ENCODE measurements at regions of chr11 and their contacts with region 1.

Region 1: DNA sequence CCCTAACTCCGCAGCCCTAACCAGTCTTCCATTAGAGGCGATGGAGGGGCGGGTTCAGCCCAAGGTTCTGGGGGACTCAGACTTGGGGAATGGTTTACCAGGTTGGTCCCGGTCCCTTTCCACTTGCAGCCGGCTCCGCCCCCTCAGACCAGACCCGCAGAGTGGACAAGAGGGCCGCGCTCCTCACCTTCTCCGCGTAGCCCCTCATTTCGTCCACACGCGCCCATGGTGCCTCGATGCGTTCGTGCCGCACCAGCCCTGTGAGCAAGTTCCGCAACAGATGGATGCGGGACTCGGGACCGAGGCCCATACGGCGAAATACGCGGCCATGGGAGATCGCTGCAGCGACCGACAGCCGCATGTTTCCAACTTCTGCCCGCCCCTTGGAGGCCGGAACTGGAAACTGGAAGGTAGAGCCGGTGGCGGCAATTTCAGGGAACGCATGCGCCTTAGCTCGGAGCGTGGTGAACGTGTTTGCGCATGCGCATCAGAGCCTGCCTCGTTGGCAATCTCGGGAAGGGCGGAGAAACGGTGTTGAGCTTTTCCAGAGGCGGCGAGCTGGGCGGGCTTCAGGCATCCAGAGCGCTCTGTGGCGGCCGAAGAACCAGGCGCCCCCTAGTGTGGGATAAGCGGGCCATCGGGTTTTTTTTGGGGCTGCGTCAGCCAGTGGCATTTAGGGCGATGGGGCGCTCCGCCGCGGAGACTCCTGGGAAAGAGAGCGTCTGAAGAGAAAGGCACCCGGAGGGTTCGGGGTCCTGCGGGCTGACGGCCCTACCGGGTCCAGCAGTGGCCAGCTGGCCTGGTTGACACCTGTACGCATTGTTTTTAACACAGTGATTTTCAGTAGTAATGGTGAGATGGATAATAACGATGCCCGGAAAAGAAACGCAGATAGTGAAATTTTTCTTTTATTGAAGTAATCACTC is at the start of gene MRPL17:
- DNase-seq: peak; percentile 97 to 99
- ATAC-seq: peak; percentile 95 to 98
- H3K4me3 ChIP-seq: peak within 1 kb of the TSS; percentile 83
- H3K27ac ChIP-seq: peak within 1 kb of the TSS; percentile 86 to 95
- H3K4me1 ChIP-seq: peaks cover 11% of the 10 kb centered on the region; the same call in 2 of the 3 replicates
- CTCF ChIP-seq: peak; percentile 88
- EP300 ChIP-seq: no peak
- POLR2A ChIP-seq: peak; percentile 98
- RAD21 ChIP-seq: peak; percentile 55 to 76
- polyA plus RNA-seq, gene MRPL17: 96.8 and 107 TPM in 2 replicates

Region 2: GRCh38 chr11:6531267-6531752 is 151.9 kb before region 1 on chr11:
- CTCF ChIA-PET with region 1: interaction called, 35 read pairs
- POLR2A ChIA-PET with region 1: interaction called, 5 read pairs
- DNase-seq: peak; percentile 57 to 79
- ATAC-seq: peak; percentile 88 to 93
- H3K4me3 ChIP-seq: no peak overlapping the region
- H3K27ac ChIP-seq: no peak overlapping the region
- H3K4me1 ChIP-seq: no peaks in the 10 kb centered on the region
- CTCF ChIP-seq: peak; percentile 76
- EP300 ChIP-seq: no peak
- POLR2A ChIP-seq: no peak
- RAD21 ChIP-seq: peak; percentile 69 to 76

Region 3: DNA sequence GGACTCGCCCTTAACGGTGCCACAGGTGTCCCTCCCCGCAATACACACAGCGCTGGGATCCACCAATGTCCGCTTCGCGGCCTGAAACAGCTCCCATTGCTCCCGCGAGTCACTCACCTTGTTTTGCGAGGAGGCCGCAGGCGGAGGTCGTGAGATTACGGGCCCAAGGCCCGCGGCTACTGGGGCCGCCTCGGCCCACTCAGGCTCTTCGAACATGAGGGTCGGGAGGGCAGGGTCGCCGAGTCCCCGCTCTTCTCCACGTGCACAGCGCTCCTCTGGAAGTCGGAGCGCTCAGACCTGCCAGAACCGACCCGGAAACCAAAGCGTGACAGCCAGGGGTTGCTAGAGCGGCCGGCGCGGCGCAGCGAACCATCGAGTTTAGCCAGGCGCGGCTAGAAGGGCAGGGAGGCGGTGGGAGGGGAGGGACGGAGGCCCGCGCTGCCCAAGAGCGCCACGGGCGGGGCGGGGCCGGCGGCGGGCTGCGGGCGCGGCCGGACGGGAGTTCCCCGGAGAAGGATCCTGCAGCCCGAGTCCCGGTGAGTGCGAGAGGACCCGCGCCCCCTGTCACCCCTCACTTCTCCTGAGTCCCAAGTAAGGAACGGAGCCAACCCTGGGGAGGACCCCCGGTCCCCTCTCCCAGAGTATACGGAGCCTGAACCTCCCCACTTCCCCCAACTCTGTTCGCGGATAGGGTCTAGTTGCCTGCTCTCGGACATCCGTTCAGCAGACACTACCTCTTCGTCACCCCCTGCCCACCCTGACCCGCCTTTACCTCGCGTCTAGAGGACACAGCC is 79.7 kb before region 1 on chr11 and contains the starts of genes ILK and RRP8:
- CTCF ChIA-PET with region 1: interaction called, 23 read pairs
- POLR2A ChIA-PET with region 1: interaction called, 13 read pairs
- DNase-seq: peak; percentile 91 to 92
- ATAC-seq: peak; percentile 80 to 90
- H3K4me3 ChIP-seq: peak within 1 kb of the TSS; percentile 79
- H3K27ac ChIP-seq: peak within 1 kb of the TSS; percentile 90 to 98
- H3K4me1 ChIP-seq: peaks cover 39% of the 10 kb centered on the region
- CTCF ChIP-seq: no peak
- EP300 ChIP-seq: no peak
- POLR2A ChIP-seq: peak; percentile 58
- RAD21 ChIP-seq: no peak
- polyA plus RNA-seq, gene ILK: 109 and 120 TPM in 2 replicates
- polyA plus RNA-seq, gene RRP8: 20.5 and 25.9 TPM in 2 replicates

Region 4: DNA sequence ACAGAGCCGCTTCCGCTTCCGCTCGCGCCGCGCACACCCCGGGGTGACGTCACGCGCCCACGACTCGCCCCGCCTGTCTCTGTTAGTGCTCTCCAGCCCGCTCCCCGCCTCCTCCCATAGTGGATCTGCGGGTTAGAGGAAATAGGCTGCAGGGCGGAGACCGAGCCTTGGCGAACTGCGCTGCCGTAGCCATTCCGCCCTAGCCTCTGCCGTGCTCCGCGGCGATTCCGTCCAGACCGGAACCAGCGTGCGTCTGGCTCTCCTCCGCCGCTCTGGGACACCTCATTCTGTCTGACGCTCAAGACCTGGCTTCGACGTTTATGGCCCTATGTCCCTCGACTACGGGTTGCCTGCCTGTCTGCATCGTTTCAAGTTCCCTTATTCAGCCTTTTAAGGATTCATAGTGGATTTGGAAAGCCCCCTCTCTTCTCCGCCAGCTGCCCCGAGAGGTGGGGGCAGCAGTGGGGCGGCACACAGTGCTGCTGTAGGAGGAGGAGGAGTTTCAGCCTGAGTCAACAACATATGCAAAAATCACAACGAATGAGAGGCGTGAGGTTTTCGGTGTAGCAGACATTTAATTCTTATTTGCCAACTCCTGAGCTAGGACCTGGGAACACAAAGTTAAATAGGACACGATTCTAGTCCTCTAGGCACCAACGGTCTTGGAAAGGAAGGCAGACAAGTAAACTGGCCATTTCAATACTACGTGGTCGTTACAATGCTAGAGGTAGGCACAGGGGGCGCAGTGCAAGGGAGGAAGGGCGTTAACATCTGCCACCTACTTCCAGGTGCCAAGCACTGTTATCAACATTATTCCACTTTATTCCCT is 70.8 kb before region 1 on chr11 and contains the start of gene TAF10:
- CTCF ChIA-PET with region 1: interaction called, 27 read pairs
- POLR2A ChIA-PET with region 1: interaction called, 15 read pairs
- DNase-seq: peak; percentile 89 to 94
- ATAC-seq: peak; percentile 90 to 94
- H3K4me3 ChIP-seq: peak within 1 kb of the TSS; percentile 78
- H3K27ac ChIP-seq: peak within 1 kb of the TSS; percentile 92 to 98
- H3K4me1 ChIP-seq: peaks cover 18% of the 10 kb centered on the region
- CTCF ChIP-seq: peak; percentile 41
- EP300 ChIP-seq: no peak
- POLR2A ChIP-seq: peak; percentile 96
- RAD21 ChIP-seq: no peak; a peak in 1 of 5 replicates
- polyA plus RNA-seq, gene TAF10: 174 and 242 TPM in 2 replicates

Region 5: DNA sequence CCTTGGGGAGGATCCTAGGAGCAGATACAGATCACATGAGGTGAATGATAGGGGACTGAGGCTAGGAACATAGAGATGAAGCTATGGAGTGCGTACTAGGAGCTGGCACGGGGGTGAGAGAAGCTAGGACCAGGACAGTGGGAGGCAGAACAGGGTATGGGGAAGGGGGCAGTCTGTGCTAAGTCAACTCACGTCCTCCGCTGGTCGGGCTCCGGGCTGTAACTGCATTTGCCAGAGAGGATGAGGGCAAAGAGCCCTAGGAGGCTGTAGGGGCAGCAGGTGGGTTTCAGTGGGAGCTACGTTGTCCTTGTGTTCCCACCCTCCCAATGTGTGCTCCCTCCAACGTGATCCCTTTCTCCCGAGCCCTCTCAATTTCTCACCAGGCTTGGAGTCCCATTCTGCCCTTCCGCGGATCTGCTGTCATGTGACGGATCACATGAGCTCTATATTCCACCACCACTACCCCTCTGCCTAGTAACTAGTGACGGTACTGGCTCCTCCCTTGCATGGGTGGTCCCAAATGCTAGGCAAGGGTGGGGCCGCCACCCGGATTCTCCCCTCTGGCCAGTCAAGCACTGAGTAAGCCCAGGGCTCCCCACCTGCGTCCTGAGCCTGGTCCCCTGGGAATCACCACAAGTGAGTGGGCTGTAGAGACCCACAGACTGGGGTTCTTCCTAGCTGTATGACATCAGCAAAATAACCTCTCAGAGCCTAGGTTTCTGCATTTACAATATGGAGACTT is 64.0 kb before region 1 on chr11 and contains the start of gene TPP1:
- CTCF ChIA-PET with region 1: interaction called, 27 read pairs
- POLR2A ChIA-PET with region 1: interaction called, 11 read pairs
- DNase-seq: peak; percentile 94 to 99
- ATAC-seq: peak; percentile 92 to 99
- H3K4me3 ChIP-seq: peak within 1 kb of the TSS; percentile 70
- H3K27ac ChIP-seq: peak within 1 kb of the TSS; percentile 80 to 90
- H3K4me1 ChIP-seq: peaks cover 12% of the 10 kb centered on the region; the same call in 2 of the 3 replicates
- CTCF ChIP-seq: no peak
- EP300 ChIP-seq: no peak
- POLR2A ChIP-seq: peak; percentile 69
- RAD21 ChIP-seq: no peak
- polyA plus RNA-seq, gene TPP1: 53.2 and 63.0 TPM in 2 replicates

Region 6: GRCh38 chr11:6635082-6635932 is 47.9 kb before region 1 on chr11:
- CTCF ChIA-PET with region 1: interaction called, 10 read pairs
- POLR2A ChIA-PET with region 1: no interaction called
- DNase-seq: no peak
- ATAC-seq: no peak
- H3K4me3 ChIP-seq: no peak overlapping the region
- H3K27ac ChIP-seq: peak overlapping the region in 1 of 2 experiments; percentile 28; a peak in 1 of 6 replicates
- H3K4me1 ChIP-seq: peaks cover 5% of the 10 kb centered on the region; the same call in 1 of the 3 replicates
- CTCF ChIP-seq: no peak
- EP300 ChIP-seq: no peak
- POLR2A ChIP-seq: no peak
- RAD21 ChIP-seq: no peak

Region 7: GRCh38 chr11:6695377-6695776 is 12.2 kb after region 1 on chr11:
- CTCF ChIA-PET with region 1: interaction called, 12 read pairs
- POLR2A ChIA-PET with region 1: interaction called, 5 read pairs
- DNase-seq: no peak
- ATAC-seq: no peak
- H3K4me3 ChIP-seq: no peak overlapping the region
- H3K27ac ChIP-seq: no peak overlapping the region
- H3K4me1 ChIP-seq: no peaks in the 10 kb centered on the region
- CTCF ChIP-seq: no peak
- EP300 ChIP-seq: no peak
- POLR2A ChIP-seq: no peak
- RAD21 ChIP-seq: no peak

Measured in A549 (cell line).